Activated T-helper 1 cell treated with anti-CD3 and anti-CD28 coated beads, Interleukin-12 subunit alpha, Interleukin-12 subunit beta, Interleukin-2, Interleukin-4 antibody, amounts not matched to agents 30 ng/mL and 10 ng/mL and 1 ng/mL, durations not matched to agents 14 hours and 24 hours and 36 hours (primary cell): ENCODE measurements at regions of chr14 and their contacts with region 1.

Region 1: GRCh38 chr14:50667996-50668825 is at the start of gene SAV1:
- DNase-seq: peak; percentile 20
- H3K4me3 Mint-ChIP-seq: peak within 1 kb of the TSS; percentile 86
- H3K27ac Mint-ChIP-seq: peak within 1 kb of the TSS; percentile 47
- H3K4me1 Mint-ChIP-seq: peaks cover 15% of the 10 kb centered on the region
- H3K27me3 Mint-ChIP-seq: peaks cover 10% of the 10 kb centered on the region
- total RNA-seq, gene SAV1: 10.3 and 12.3 TPM in 2 replicates

Region 2: DNA sequence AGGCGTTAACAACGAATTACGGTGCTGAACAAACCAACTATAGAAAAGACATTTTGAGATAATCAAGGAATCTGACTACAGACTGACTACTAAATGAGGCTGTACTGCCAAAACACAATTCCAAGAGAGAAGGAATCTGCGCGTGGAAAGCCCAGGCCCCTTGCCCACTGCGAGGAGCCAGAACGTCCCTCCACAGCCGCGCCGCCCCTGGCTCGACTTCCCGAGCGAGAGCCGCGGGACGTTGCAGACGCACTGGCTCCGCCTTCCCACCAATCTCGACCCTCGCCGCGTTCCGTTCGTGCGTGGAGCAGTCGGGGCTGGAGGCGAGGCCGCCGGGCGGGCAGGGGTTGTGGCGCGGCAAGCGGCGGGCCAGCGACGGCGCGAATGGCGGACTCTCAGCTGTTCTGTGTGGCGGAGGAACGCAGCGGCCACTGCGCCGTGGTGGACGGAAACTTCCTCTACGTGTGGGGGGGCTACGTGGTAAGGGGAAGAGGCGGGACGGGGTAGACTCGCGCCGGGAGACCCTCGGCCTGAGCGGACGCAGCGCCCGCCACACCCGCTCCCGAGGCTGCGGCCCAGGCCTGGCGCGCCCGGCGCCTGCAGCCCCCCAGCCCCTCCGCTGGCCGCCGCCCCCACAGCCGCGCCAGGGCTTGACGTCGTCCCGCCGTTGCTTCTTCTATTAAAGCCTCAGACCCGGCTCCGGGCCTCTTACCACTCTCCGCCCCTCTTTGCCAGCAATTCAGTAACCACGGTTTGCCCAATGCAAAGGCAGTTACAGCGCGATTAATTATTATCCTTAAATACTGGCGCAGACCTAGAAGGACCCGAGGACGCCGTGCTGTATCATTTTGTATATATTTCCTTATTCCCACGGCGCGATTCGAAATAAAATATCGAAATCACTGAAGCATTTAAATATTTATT is 975.1 kb before region 1 on chr14 and contains the start of gene KLHDC1:
- intact Hi-C with region 1: loop called (anchors 10 kb)
- DNase-seq: peak; percentile 74
- H3K4me3 Mint-ChIP-seq: peak within 1 kb of the TSS; percentile 87
- H3K27ac Mint-ChIP-seq: peak within 1 kb of the TSS; percentile 94
- H3K4me1 Mint-ChIP-seq: peaks cover 19% of the 10 kb centered on the region
- H3K27me3 Mint-ChIP-seq: peaks cover 1% of the 10 kb centered on the region
- total RNA-seq, gene KLHDC1: 0.93 and 1.9 TPM in 2 replicates

Region 3: GRCh38 chr14:50559990-50560930 is 108.0 kb before region 1 on chr14 and contains the start of gene ATL1:
- intact Hi-C with region 1: loop called (anchors 5 kb)
- DNase-seq: peak; percentile 22
- H3K4me3 Mint-ChIP-seq: peak within 1 kb of the TSS; percentile 83
- H3K27ac Mint-ChIP-seq: peak within 1 kb of the TSS; percentile 5
- H3K4me1 Mint-ChIP-seq: peaks cover 20% of the 10 kb centered on the region
- H3K27me3 Mint-ChIP-seq: peaks cover 66% of the 10 kb centered on the region
- total RNA-seq, gene ATL1: 0.83 and 1.2 TPM in 2 replicates

Region 4: DNA sequence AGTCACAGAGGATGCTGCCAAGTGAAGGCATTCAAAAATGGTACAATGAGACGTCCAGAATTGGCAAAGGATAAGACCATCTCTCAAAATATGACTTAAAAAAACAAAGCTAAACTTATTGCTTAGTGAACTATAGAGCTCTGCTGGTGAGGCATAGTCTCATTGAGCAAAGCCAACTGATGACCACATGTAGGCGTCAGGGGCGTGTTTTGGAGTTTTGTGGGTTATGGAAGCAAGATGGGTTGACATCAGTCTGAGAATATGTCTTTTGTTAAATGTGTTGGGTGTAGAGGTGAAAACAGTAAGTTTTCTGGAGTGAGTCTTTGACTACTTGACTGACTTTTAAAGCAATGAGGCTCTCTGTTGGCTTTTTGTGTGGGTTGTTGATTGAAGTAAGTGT is 61.0 kb before region 1 on chr14:
- intact Hi-C with region 1: loop called (anchors 5 kb)
- DNase-seq: no peak
- H3K4me3 Mint-ChIP-seq: no peak overlapping the region
- H3K27ac Mint-ChIP-seq: peak overlapping the region; percentile 0
- H3K4me1 Mint-ChIP-seq: peaks cover 7% of the 10 kb centered on the region
- H3K27me3 Mint-ChIP-seq: peaks cover 16% of the 10 kb centered on the region

Region 5: DNA sequence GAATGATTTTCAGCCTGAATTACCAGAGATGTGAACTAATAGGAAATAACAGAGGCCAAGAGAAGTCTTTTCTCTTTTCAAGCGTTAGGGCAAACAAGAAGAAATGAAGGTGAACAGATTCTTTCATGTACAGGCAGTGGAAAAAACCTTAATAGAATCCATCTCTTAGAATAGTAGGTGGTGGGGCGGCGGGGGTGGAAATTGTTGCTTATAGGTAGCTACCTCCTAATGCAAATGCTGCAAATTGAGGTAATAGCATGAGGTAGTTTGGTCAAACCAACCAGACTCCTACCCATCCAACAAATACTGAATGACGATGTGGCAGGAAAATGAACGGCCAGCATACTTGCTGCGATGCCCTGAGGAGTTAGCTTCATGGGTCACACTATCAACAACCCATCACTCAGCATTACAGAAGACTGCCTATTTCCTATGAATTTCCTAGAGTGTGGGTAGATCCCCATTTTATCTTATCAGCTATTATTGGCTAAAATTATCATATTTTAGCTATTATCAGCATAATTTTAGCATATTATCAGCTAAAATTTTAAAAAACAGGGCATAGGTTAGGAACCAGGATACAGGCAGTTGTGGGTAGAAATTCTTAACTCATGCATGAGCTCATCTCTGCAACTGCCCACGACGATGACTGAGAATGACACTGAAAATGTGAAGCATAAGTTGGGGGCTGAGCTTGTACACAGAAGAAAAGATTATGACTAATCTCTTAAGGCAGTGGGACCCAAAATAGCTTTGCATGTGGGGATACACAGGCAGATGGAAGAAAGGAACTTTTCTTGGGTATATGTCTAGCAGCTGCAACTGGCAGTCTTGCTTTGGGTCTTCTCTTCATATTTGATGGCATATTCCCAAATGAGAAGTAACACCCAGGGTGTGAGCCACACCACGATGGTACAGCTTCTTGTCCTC is 94.1 kb after region 1 on chr14:
- intact Hi-C with region 1: loop called (anchors 2 kb)
- DNase-seq: no peak
- H3K4me3 Mint-ChIP-seq: peak overlapping the region; percentile 7
- H3K27ac Mint-ChIP-seq: peak overlapping the region; percentile 74
- H3K4me1 Mint-ChIP-seq: peaks cover 19% of the 10 kb centered on the region
- H3K27me3 Mint-ChIP-seq: no peaks in the 10 kb centered on the region

Region 6: GRCh38 chr14:50773632-50774541 is 105.7 kb after region 1 on chr14:
- intact Hi-C with region 1: loop called (anchors 2 kb)
- DNase-seq: no peak
- H3K4me3 Mint-ChIP-seq: no peak overlapping the region
- H3K27ac Mint-ChIP-seq: no peak overlapping the region
- H3K4me1 Mint-ChIP-seq: peaks cover 19% of the 10 kb centered on the region
- H3K27me3 Mint-ChIP-seq: no peaks in the 10 kb centered on the region